ENCODE measurements at regions of chr1 and their contacts with region 1.

Region 1: DNA sequence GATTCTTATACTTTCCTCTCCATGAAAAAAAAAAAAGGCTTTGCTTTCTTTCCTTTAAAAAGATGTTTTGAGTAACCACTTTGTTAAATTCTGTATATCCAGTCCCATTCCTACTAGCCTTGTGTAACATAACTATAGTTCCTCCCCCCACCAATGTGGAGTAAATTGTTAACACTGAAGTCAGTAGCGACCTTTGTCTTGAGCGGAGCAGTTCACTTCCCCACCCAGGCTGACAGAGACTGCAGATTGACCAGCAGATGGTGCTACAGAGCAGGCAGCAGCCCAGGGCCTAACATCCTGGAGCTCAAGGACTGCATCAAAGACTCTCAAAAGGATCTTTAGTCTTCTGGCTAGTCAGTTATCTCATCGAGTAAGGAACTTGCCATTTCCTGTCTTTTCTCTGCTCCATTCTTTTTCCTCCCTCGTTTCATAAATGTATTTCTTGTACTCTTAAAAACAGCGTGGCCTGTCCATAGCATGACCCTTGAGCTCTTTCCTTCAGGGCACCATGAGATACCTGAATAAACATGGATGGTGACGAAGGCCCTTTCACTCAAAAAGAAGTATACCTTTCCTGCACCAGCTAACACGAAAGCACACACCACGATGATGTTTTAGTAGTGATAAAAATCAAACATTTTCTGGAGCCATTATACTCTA is 503.5 kb upstream of the PKN2 start:
- DNase-seq: peak; percentile 89
- H3K4me3 ChIP-seq: no peak overlapping the region
- H3K27ac ChIP-seq: no peak overlapping the region
- H3K4me1 ChIP-seq: no peaks in the 10 kb centered on the region
- H3K27me3 ChIP-seq: no peaks in the 10 kb centered on the region
- CTCF ChIP-seq: peak; percentile 94

Region 2: GRCh38 chr1:87840767-87841166 is 339.8 kb before region 1 on chr1:
- intact Hi-C with region 1: no loop called
- DNase-seq: no peak
- H3K4me3 ChIP-seq: no peak overlapping the region
- H3K27ac ChIP-seq: no peak overlapping the region
- H3K4me1 ChIP-seq: no peaks in the 10 kb centered on the region
- H3K27me3 ChIP-seq: no peaks in the 10 kb centered on the region
- CTCF ChIP-seq: no peak

Region 3: DNA sequence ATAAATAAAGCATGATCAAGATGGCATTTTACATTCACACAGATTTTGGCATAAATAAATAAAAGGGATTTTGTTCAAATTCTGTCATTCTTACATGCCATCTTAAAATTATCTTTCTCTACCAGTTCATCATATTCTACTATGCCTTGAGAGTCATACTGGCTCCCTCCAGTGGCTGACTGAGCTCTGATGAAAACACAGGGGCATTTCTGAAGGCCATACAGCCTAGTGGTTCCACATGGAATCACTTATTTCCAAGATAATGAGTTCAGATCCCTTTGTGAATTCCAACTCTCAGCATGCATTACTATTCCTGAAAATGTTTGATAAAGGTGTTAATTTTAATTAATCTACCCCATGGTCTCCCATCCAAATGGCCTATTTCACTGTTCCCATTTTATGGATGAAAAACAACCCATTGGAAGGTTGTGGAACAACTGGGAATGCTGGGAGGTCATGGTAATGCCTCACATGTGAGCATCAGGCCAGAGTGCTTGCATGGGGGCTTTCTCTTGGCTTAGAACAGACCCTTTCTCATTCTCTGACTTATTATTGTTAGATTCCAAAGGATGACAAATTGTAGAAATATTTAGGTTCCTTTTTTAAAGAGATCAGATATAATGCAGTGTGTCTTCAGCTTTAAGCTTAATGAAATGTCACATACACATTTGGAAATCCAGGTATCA is 118.9 kb before region 1 on chr1:
- intact Hi-C with region 1: no loop called
- DNase-seq: peak; percentile 59
- H3K4me3 ChIP-seq: no peak overlapping the region
- H3K27ac ChIP-seq: no peak overlapping the region
- H3K4me1 ChIP-seq: no peaks in the 10 kb centered on the region
- H3K27me3 ChIP-seq: no peaks in the 10 kb centered on the region
- CTCF ChIP-seq: peak; percentile 66

Region 4: DNA sequence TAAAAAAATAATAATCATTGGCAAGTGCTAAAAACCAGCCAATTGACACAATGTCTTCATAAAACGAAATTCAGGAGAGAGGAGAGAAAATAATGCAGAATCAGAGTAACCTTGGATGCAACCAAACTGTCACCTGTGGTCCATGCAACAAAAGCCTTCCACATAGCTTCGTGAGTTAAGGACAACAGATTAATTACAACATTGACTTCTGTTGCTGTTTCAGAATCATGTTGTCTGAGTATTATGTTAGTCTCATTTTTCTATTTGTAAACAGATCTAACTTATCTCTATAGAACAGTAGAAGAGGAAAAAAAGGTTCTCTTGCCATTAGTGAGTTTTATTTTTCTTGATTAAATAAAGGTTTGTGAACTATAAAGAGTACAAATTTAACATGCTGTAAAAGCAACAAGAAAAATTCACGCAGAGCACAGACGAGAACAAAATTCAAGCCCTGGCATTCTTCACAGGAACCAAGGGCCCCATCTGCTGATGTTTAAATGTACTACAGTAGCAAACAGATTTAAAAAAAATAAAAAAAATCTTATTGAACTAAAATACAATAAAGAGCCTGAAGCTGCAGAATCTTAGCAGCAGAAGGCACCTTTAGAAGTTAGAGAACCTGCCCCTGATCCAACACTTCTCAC is 122.4 kb after region 1 on chr1:
- intact Hi-C with region 1: loop called (anchors 5 kb)
- DNase-seq: no peak
- H3K4me3 ChIP-seq: no peak overlapping the region
- H3K27ac ChIP-seq: no peak overlapping the region
- H3K4me1 ChIP-seq: no peaks in the 10 kb centered on the region
- H3K27me3 ChIP-seq: no peaks in the 10 kb centered on the region
- CTCF ChIP-seq: peak; percentile 25

Region 5: DNA sequence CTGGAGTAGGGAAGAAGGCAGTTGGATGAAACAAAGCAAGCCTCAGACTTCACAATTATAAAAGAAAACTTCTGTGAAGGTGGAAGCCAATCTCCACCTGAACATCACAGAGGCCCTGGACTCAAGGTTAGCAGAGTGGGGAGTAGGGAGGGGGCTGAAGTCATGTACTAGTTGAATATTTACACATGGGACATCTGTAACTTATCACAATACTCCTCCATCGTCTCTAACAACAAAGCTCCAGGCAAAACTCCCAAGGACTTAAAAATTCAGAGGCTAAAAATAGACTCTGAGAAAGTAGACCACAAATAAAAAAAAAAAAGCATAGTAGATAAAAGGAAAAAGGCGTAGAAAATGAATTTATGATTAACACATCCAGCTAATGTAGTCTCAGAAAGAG is 177.2 kb after region 1 on chr1:
- intact Hi-C with region 1: no loop called
- DNase-seq: no peak
- H3K4me3 ChIP-seq: no peak overlapping the region
- H3K27ac ChIP-seq: no peak overlapping the region
- H3K4me1 ChIP-seq: no peaks in the 10 kb centered on the region
- H3K27me3 ChIP-seq: no peaks in the 10 kb centered on the region
- CTCF ChIP-seq: no peak

Measured in colonic mucosa (tissue), 4 donors.